ENCODE measurements at regions of chr10 and their contacts with region 1.

Region 1: GRCh38 chr10:1972406-1972805 is 235.1 kb upstream of the ADARB2 start:
- DNase-seq: no peak
- H3K27ac ChIP-seq: no peak overlapping the region
- CTCF ChIP-seq: no peak

Region 2: GRCh38 chr10:1448252-1448929 is 524.0 kb before region 1 on chr10:
- CTCF ChIA-PET with region 1: interaction called, 10 read pairs
- POLR2A ChIA-PET with region 1: no interaction called
- DNase-seq: no peak
- H3K27ac ChIP-seq: no peak overlapping the region
- CTCF ChIP-seq: no peak